ENCODE measurements at regions of chr10 and their contacts with region 1.

Region 1: GRCh38 chr10:80662577-80663261 is 125.0 kb downstream of the SH2D4B start:
- DNase-seq: peak; percentile 65
- H3K4me3 ChIP-seq: peak overlapping the region in 1 of 3 experiments; percentile 6
- H3K27ac ChIP-seq: no peak overlapping the region
- H3K4me1 ChIP-seq: no peaks in the 10 kb centered on the region
- H3K27me3 ChIP-seq: no peaks in the 10 kb centered on the region
- CTCF ChIP-seq: peak; percentile 80 to 88

Region 2: GRCh38 chr10:80444646-80445319 is 217.9 kb before region 1 on chr10:
- CTCF ChIA-PET with region 1: no interaction called
- dilution Hi-C with region 1: no loop called
- in situ Hi-C with region 1: no loop called
- intact Hi-C with region 1: loop called (anchors 1 kb)
- DNase-seq: peak; percentile 57
- H3K4me3 ChIP-seq: no peak overlapping the region
- H3K27ac ChIP-seq: no peak overlapping the region
- H3K4me1 ChIP-seq: peaks cover 3% of the 10 kb centered on the region
- H3K27me3 ChIP-seq: no peaks in the 10 kb centered on the region
- CTCF ChIP-seq: peak; percentile 80 to 92

Region 3: GRCh38 chr10:80535671-80536365 is 126.9 kb before region 1 on chr10:
- CTCF ChIA-PET with region 1: no interaction called
- dilution Hi-C with region 1: no loop called
- in situ Hi-C with region 1: no loop called
- intact Hi-C with region 1: loop called (anchors 5 kb)
- DNase-seq: peak; percentile 34
- H3K4me3 ChIP-seq: peak overlapping the region; percentile 9 to 50 (median 35)
- H3K27ac ChIP-seq: peak overlapping the region; percentile 13
- H3K4me1 ChIP-seq: peaks cover 25% of the 10 kb centered on the region
- H3K27me3 ChIP-seq: no peaks in the 10 kb centered on the region
- CTCF ChIP-seq: peak; percentile 39 to 72

Region 4: GRCh38 chr10:80599424-80599847 is 63.3 kb before region 1 on chr10:
- CTCF ChIA-PET with region 1: interaction called, 7 read pairs
- dilution Hi-C with region 1: no loop called
- in situ Hi-C with region 1: no loop called
- intact Hi-C with region 1: loop called (anchors 1 kb)
- DNase-seq: peak; percentile 25
- H3K4me3 ChIP-seq: no peak overlapping the region
- H3K27ac ChIP-seq: no peak overlapping the region
- H3K4me1 ChIP-seq: no peaks in the 10 kb centered on the region
- H3K27me3 ChIP-seq: no peaks in the 10 kb centered on the region
- CTCF ChIP-seq: peak; percentile 91 to 93

Region 5: GRCh38 chr10:80612261-80612660 is 50.5 kb before region 1 on chr10:
- CTCF ChIA-PET with region 1: no interaction called
- dilution Hi-C with region 1: no loop called
- in situ Hi-C with region 1: no loop called
- intact Hi-C with region 1: no loop called
- DNase-seq: peak; percentile 17
- H3K4me3 ChIP-seq: no peak overlapping the region
- H3K27ac ChIP-seq: no peak overlapping the region
- H3K4me1 ChIP-seq: no peaks in the 10 kb centered on the region
- H3K27me3 ChIP-seq: no peaks in the 10 kb centered on the region
- CTCF ChIP-seq: no peak

Region 6: DNA sequence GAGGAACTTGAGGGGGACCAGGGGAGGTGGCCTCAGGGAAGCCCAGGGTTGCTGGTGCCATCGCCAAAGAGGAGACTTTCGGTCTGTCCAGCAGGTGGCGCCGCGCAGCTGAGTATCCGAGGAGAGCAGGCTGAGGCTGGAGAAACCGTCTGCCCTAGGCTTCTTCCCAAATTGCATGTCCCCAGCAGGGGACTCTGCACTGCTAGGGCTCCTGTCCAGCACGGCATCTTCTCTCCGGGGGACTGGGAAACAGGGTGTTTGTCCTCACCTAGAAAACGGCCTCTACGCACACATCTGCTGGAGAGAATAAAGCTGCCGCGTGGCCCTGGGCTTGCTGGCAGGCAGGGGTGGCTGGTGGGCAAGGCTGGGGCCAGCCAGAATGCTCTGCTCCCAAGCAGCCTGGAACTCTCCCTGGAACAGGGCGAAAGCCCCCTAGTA is 36.9 kb after region 1 on chr10:
- CTCF ChIA-PET with region 1: no interaction called
- dilution Hi-C with region 1: no loop called
- in situ Hi-C with region 1: no loop called
- intact Hi-C with region 1: loop called (anchors 5 kb)
- DNase-seq: peak; percentile 40
- H3K4me3 ChIP-seq: no peak overlapping the region
- H3K27ac ChIP-seq: no peak overlapping the region
- H3K4me1 ChIP-seq: no peaks in the 10 kb centered on the region
- H3K27me3 ChIP-seq: no peaks in the 10 kb centered on the region
- CTCF ChIP-seq: peak; percentile 74 to 89

Region 7: GRCh38 chr10:80709866-80710265 is 47.1 kb after region 1 on chr10:
- CTCF ChIA-PET with region 1: no interaction called
- dilution Hi-C with region 1: loop called (anchors 5 kb)
- in situ Hi-C with region 1: no loop called
- intact Hi-C with region 1: no loop called
- DNase-seq: no peak
- H3K4me3 ChIP-seq: no peak overlapping the region
- H3K27ac ChIP-seq: no peak overlapping the region
- H3K4me1 ChIP-seq: no peaks in the 10 kb centered on the region
- H3K27me3 ChIP-seq: no peaks in the 10 kb centered on the region
- CTCF ChIP-seq: no peak

Region 8: DNA sequence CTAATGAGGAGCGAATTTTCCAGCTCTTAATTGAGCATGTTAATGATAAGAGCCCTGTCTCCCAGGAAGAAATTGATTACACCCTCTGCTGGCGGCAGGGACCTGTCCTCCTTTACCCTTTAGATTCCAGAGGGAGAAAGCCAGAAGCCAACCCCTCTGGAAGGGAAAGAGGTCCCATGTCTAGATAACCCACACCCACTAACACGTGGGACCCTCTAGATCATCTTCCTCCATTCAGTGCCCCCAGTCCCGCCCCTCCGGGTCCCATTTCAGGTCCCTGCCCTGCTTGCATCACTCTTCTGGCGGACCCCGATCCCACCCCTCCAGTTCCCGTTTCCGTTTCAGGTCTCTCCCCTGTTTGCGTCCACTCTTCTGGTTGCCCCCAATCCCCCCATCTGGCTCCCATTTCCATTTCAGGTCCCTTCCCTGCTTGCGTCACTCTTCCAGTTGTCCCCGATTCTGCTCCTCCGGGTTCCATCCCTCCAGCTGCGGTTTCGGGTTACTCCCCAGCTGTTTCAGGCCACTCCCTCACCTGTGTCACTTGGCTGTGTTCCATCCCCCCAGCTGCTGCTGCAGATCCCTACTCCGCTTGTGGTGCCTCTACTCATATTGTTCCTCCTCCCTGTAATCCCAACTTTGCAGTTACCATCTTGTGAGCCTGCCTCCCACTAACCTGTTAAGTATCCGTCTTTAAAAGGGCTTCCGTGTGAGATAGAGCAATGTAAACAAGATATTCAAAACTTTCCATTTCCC is 77.4 kb after region 1 on chr10:
- CTCF ChIA-PET with region 1: no interaction called
- dilution Hi-C with region 1: no loop called
- in situ Hi-C with region 1: no loop called
- intact Hi-C with region 1: no loop called
- DNase-seq: no peak
- H3K4me3 ChIP-seq: no peak overlapping the region
- H3K27ac ChIP-seq: no peak overlapping the region
- H3K4me1 ChIP-seq: no peaks in the 10 kb centered on the region
- H3K27me3 ChIP-seq: no peaks in the 10 kb centered on the region
- CTCF ChIP-seq: no peak

Region 9: GRCh38 chr10:81018708-81019365 is 356.1 kb after region 1 on chr10:
- CTCF ChIA-PET with region 1: no interaction called
- dilution Hi-C with region 1: no loop called
- in situ Hi-C with region 1: no loop called
- intact Hi-C with region 1: loop called (anchors 2 kb)
- DNase-seq: peak; percentile 34
- H3K4me3 ChIP-seq: no peak overlapping the region
- H3K27ac ChIP-seq: no peak overlapping the region
- H3K4me1 ChIP-seq: no peaks in the 10 kb centered on the region
- H3K27me3 ChIP-seq: no peaks in the 10 kb centered on the region
- CTCF ChIP-seq: peak; percentile 60 to 81

Region 10: DNA sequence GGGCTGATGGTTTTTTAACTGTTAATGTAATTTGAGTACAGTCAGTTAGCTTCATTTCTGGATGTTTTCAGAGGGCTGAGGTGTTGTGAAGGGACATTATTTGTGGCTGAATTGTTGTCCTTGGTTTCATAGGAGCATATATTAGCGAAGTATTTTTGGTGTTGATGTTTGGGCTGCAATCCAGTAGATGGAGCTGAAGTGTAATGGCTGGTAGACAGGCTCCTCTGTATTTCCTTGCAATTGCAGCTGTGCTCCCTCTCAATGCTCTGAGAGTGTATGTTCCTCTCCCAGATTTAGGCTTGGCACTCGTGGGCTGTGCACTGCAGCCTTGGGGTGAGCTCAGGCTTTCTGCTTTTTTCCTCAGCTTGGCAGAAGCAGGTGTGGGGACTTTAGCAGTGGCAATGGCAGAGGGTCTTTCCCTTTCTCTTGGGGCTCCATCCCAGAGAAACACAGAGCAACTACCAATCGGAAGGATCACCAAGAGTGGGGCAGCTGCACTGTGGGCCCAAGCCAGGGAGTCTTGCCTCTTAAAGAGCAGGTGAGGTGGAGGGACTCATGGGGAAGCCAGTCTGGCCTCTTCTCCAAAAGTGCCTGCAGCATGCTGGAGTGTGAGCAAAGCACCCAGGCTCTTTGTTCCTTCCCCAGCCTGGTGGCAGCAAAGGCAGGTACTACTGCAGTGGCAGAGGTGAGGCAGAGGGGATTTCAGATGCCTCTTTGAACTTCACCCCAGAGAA is 419.3 kb after region 1 on chr10:
- CTCF ChIA-PET with region 1: no interaction called
- dilution Hi-C with region 1: no loop called
- in situ Hi-C with region 1: no loop called
- intact Hi-C with region 1: no loop called
- DNase-seq: peak; percentile 0
- H3K4me3 ChIP-seq: no peak overlapping the region
- H3K27ac ChIP-seq: no peak overlapping the region
- H3K4me1 ChIP-seq: no peaks in the 10 kb centered on the region
- H3K27me3 ChIP-seq: no peaks in the 10 kb centered on the region
- CTCF ChIP-seq: peak in 1 of 2 donors; percentile 14